SK-N-SH (cell line): ENCODE measurements at regions of chr4 and their contacts with region 1.

Region 1: GRCh38 chr4:147866532-147867271 is 134.8 kb downstream of the ARHGAP10 start:
- DNase-seq: peak; percentile 72
- H3K4me3 ChIP-seq: peak overlapping the region in 1 of 2 experiments; percentile 48; a peak in 1 of 4 replicates
- H3K27ac ChIP-seq: peak overlapping the region in 1 of 2 experiments; percentile 58; a peak in 1 of 4 replicates
- H3K4me1 ChIP-seq: peaks cover 12 to 30% of the 10 kb centered on the region in 2 experiments; a peak in 2 of 4 replicates
- H3K27me3 ChIP-seq: no peaks in the 10 kb centered on the region
- CTCF ChIP-seq: peak; percentile 100
- EP300 ChIP-seq: no peak
- RAD21 ChIP-seq: peak; percentile 100

Region 2: DNA sequence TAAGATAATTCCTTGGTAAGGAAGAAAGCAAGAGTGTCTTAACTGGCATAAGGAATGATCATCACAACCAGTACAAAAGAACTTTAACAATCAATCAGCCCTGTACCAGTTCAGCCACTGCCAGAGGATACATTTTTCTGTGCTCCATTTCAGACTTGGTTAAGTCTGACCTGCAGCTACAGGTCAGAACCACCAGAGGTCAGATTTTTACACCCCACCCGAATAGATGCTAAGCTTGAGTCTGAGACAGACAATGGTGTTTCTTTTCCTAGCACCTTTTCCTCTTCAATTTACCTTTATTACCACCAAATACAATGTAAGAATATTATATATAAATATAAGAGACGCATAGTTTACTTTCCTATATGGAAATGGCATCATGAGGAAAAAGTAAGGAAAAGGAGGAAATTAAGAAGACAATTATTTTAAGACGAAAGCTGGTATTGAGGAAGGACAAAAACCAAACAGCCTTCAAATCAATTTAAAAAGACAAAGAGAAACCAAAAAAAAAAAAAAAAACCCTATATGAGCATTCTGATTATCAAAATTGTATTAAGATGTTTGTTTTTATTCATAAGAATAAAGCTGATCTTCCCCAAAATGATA is 705.7 kb before region 1 on chr4:
- CTCF ChIA-PET with region 1: interaction called, 12 read pairs
- POLR2A ChIA-PET with region 1: no interaction called
- DNase-seq: peak; percentile 77
- H3K4me3 ChIP-seq: peak overlapping the region in 1 of 2 experiments; percentile 30; a peak in 1 of 4 replicates
- H3K27ac ChIP-seq: no peak overlapping the region
- H3K4me1 ChIP-seq: peaks cover 3 to 18% of the 10 kb centered on the region in 2 experiments; a peak in 3 of 4 replicates
- H3K27me3 ChIP-seq: no peaks in the 10 kb centered on the region
- CTCF ChIP-seq: peak; percentile 85
- EP300 ChIP-seq: no peak
- RAD21 ChIP-seq: peak; percentile 92

Region 3: DNA sequence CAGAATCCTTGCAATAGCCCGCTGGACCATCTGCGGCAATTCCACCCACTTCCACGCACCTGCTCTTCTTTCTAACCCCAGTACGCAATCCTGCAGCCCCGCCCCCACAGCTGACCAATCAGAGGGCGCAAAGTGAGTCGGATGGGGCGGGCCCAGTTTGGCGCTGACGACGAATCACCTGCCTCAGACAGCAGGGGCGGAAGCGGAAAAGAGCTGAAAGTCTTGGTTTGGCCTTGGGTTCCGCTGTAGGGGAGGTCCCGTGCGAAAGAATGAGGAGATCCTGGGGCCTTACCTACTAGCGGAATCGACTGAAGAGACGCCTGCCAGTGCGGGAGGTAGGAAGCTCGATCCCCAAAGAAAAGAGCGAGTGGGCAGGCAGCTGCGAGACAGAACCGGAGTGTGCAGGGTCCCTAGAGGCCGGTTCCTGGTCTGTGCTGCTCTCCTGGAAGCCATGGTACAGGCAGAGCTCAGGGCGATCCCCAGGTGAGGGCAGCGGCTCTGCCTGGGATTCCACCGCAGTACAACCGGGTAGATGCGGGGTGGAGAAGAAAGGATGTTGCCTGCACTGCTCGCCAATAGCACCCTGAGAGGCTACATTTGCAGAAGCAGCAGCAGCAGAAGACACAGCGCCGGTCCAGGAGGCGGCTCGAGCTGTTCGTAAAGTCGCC is 249.4 kb before region 1 on chr4 and contains the start of gene TMEM184C:
- CTCF ChIA-PET with region 1: interaction called, 47 read pairs
- POLR2A ChIA-PET with region 1: no interaction called
- DNase-seq: peak; percentile 89
- H3K4me3 ChIP-seq: peak within 1 kb of the TSS; percentile 79 to 98
- H3K27ac ChIP-seq: peak within 1 kb of the TSS; percentile 64 to 86; a peak in 3 of 4 replicates
- H3K4me1 ChIP-seq: peaks cover 0 to 20% of the 10 kb centered on the region in 2 experiments; a peak in 3 of 4 replicates
- H3K27me3 ChIP-seq: no peaks in the 10 kb centered on the region
- CTCF ChIP-seq: peak; percentile 25
- EP300 ChIP-seq: peak in 1 of 2 experiments; percentile 5; a peak in 1 of 4 replicates
- RAD21 ChIP-seq: no peak
- polyA plus RNA-seq, gene TMEM184C: 17.5 and 22.8 TPM in 2 replicates

Region 4: DNA sequence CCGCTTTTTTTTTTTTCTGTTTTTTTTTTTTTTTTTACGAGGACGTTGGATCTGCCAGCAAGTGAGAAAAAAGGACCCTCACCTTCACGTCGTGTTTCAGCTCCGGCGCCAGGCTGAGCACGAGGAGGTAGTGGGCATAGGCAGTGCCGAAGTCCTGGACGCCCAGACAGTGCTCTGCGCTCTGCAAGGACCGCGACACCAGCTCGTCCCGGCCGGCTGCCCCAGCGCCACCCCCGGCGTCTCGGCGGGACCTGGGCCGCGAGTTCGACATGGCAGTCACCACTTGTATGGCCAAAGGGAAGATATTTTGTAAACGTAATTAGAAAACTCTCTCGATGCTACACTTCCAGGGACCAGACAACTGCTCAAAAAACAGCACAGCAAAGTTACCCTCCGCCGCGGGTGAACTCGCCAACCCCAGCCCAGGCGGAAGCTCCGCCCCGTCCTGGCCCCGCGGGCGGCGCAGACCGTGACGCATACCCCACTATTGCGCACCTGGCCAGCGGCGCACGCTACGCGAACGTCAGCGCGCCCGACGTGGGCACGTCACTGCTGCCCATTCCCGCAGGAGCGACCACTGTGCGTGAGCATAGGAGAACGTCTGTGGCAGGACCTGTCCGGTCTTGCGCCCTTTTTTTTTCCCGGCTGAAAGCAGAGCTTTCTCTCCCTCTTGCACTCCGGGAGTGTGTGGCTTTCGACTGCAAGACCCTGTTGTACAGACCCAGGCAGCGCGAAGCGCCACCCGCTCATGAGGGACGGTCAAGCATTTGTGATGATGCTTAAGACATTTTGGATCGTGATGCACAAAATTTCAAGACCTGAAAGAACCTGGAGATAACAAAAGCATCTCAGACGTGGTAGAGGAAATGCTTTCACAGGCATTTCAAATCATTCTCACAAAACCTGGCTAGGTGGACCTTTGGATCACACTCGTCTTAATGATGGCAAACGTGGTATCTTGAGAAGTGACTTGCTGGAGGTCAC is 182.7 kb before region 1 on chr4 and contains the start of gene PRMT9:
- CTCF ChIA-PET with region 1: interaction called, 31 read pairs
- POLR2A ChIA-PET with region 1: interaction called, 6 read pairs
- DNase-seq: peak; percentile 97
- H3K4me3 ChIP-seq: peak within 1 kb of the TSS; percentile 79 to 95
- H3K27ac ChIP-seq: peak within 1 kb of the TSS; percentile 79 to 95
- H3K4me1 ChIP-seq: peaks cover 0 to 5% of the 10 kb centered on the region in 2 experiments; a peak in 2 of 4 replicates
- H3K27me3 ChIP-seq: no peaks in the 10 kb centered on the region
- CTCF ChIP-seq: no peak
- EP300 ChIP-seq: no peak
- RAD21 ChIP-seq: peak; percentile 1; the same call in 1 of the 2 replicates
- polyA plus RNA-seq, gene PRMT9: 3.9 and 5.1 TPM in 2 replicates

Region 5: GRCh38 chr4:147741190-147741785 is 125.4 kb before region 1 on chr4:
- CTCF ChIA-PET with region 1: interaction called, 17 read pairs
- POLR2A ChIA-PET with region 1: no interaction called
- DNase-seq: peak; percentile 52
- H3K4me3 ChIP-seq: no peak overlapping the region
- H3K27ac ChIP-seq: peak overlapping the region; percentile 64 to 76
- H3K4me1 ChIP-seq: peaks cover 16 to 20% of the 10 kb centered on the region in 2 experiments; a peak in 3 of 4 replicates
- H3K27me3 ChIP-seq: no peaks in the 10 kb centered on the region
- CTCF ChIP-seq: no peak
- EP300 ChIP-seq: peak; percentile 50 to 76; a peak in 3 of 4 replicates
- RAD21 ChIP-seq: no peak

Region 6: GRCh38 chr4:147816382-147817254 is 50.1 kb before region 1 on chr4:
- CTCF ChIA-PET with region 1: interaction called, 14 read pairs
- POLR2A ChIA-PET with region 1: no interaction called
- DNase-seq: no peak
- H3K4me3 ChIP-seq: no peak overlapping the region
- H3K27ac ChIP-seq: peak overlapping the region in 1 of 2 experiments; percentile 60; a peak in 1 of 4 replicates
- H3K4me1 ChIP-seq: peaks cover 0 to 33% of the 10 kb centered on the region in 2 experiments; a peak in 3 of 4 replicates
- H3K27me3 ChIP-seq: no peaks in the 10 kb centered on the region
- CTCF ChIP-seq: no peak
- EP300 ChIP-seq: no peak
- RAD21 ChIP-seq: no peak

Region 7: DNA sequence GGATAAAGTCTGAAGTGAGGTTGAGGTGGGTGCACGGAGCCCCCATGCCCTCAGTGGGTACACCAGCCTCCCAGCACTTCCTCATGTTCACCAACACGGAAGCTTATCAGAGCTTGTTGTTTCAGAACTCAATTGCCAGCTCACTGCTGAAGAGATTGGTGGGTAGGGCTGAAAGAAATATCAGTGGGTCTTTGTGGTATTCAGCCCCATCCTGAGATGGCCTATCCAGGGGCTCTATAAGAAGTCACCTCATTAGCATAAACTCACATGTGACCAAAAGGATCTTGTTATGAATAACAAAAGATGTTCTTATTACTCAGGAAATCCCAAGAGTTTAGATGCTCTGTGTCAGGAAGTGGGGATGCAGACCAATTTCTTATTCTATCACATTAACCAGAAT is 42.5 kb after region 1 on chr4:
- CTCF ChIA-PET with region 1: interaction called, 11 read pairs
- POLR2A ChIA-PET with region 1: no interaction called
- DNase-seq: no peak
- H3K4me3 ChIP-seq: no peak overlapping the region
- H3K27ac ChIP-seq: no peak overlapping the region
- H3K4me1 ChIP-seq: no peaks in the 10 kb centered on the region; a peak in 1 of 4 replicates
- H3K27me3 ChIP-seq: no peaks in the 10 kb centered on the region
- CTCF ChIP-seq: no peak
- EP300 ChIP-seq: no peak
- RAD21 ChIP-seq: no peak